Activated CD4-positive, alpha-beta memory T cell treated with anti-CD3 and anti-CD28 coated beads for 36 hours (primary cell): ENCODE measurements at regions of chr14 and their contacts with region 1.

Region 1: GRCh38 chr14:68816262-68816942 is 23.5 kb upstream of the ZFP36L1 start:
- DNase-seq: peak; percentile 93
- H3K4me3 Mint-ChIP-seq: peak overlapping the region; percentile 77
- H3K27ac Mint-ChIP-seq: peak overlapping the region; percentile 93
- H3K4me1 Mint-ChIP-seq: peaks cover 70% of the 10 kb centered on the region
- H3K27me3 Mint-ChIP-seq: no peaks in the 10 kb centered on the region

Region 2: GRCh38 chr14:67934008-67934481 is 882.4 kb before region 1 on chr14:
- CTCF ChIA-PET with region 1: interaction called, 14 read pairs
- POLR2A ChIA-PET with region 1: no interaction called
- intact Hi-C with region 1: loop called (anchors 2 kb)
- DNase-seq: no peak
- H3K4me3 Mint-ChIP-seq: no peak overlapping the region
- H3K27ac Mint-ChIP-seq: no peak overlapping the region
- H3K4me1 Mint-ChIP-seq: peaks cover 5% of the 10 kb centered on the region
- H3K27me3 Mint-ChIP-seq: no peaks in the 10 kb centered on the region

Region 3: DNA sequence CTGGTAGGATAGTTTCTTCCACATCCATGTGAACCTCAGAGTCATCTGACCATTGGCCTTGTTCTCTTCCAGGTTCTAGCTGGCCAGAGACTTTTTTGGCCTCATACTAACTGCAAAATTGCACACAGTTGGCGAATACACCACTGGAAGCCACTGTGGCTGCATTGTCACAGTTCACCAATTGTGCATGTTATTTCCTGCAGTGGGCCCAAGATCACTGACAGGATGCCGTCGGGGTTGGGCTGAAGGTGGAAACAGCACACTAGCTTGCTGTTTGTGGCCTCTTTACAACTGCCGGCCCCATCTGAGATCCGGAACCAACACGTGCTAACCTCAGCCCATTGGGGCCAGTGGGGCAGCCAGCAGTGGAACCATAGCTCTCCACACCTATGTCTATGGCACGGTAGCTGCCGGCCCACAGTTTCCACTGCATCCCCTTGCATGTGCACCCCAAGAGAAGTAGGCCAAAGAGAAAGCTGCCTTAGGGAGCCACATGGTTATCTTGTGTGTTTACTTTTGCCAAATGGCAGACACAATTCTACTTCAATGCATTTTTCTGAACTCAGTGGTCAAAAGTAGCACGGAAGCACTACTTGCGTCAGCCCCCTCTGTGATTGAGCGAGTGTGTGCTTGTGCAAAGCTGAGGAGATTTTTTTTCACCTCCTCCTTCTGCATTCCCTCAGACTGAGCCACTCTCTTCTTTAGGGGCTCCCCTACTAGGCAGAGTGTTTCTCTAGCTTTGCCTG is 532.9 kb before region 1 on chr14:
- CTCF ChIA-PET with region 1: interaction called, 3 read pairs
- POLR2A ChIA-PET with region 1: interaction called, 15 read pairs
- intact Hi-C with region 1: no loop called
- DNase-seq: peak; percentile 68
- H3K4me3 Mint-ChIP-seq: no peak overlapping the region
- H3K27ac Mint-ChIP-seq: peak overlapping the region; percentile 34
- H3K4me1 Mint-ChIP-seq: peaks cover 69% of the 10 kb centered on the region
- H3K27me3 Mint-ChIP-seq: no peaks in the 10 kb centered on the region

Region 4: GRCh38 chr14:68685419-68686204 is 130.8 kb before region 1 on chr14:
- CTCF ChIA-PET with region 1: interaction called, 3 read pairs
- POLR2A ChIA-PET with region 1: no interaction called
- intact Hi-C with region 1: loop called (anchors 1 kb)
- DNase-seq: peak; percentile 92
- H3K4me3 Mint-ChIP-seq: peak overlapping the region; percentile 47
- H3K27ac Mint-ChIP-seq: peak overlapping the region; percentile 93
- H3K4me1 Mint-ChIP-seq: peaks cover 59% of the 10 kb centered on the region
- H3K27me3 Mint-ChIP-seq: no peaks in the 10 kb centered on the region

Region 5: GRCh38 chr14:68788996-68789820 is 27.2 kb before region 1 on chr14:
- CTCF ChIA-PET with region 1: interaction called, 218 read pairs
- POLR2A ChIA-PET with region 1: interaction called, 163 read pairs
- intact Hi-C with region 1: loop called (anchors 1 kb)
- DNase-seq: peak; percentile 91
- H3K4me3 Mint-ChIP-seq: peak overlapping the region; percentile 89
- H3K27ac Mint-ChIP-seq: peak overlapping the region; percentile 99
- H3K4me1 Mint-ChIP-seq: peaks cover 50% of the 10 kb centered on the region
- H3K27me3 Mint-ChIP-seq: no peaks in the 10 kb centered on the region